Vagina (tissue), 2 donors: ENCODE measurements at regions of chr11 and their contacts with region 1.

Region 1: DNA sequence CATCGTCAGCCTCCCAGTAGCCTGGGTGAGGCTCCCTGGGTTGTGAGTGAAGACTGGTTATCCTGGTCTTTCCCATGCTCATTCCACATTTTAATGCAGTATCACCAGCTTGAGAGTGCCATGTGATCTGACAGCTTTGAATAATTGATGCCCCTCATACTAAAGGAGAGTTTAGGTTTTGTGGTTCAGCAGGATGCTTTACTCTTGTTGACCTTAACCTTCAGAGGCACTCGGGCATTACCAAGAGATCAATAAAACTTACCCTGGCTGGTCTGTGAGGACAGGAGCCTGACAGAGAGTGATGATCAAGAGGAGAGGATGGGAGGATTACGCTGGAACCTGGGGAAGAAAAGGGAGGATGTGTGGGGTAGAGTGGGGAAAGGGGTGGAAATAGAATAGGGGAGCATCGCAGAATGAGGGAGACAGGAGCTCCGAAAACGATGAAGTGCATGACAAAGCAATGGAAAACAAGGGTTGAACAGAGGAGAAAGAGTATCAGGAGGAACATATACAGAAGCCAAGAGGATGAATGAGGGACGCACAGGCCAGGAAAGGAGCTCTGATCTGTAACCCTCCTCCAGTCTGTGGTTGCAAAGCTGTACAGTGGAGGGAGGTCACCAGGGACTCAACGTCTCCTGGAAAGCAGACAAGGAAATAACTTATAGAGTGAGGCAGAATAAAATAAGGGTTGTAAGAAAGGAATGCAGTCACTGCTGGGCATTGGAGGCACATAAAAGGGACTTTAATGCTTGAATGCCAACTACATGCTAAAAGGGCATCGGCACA is 594.5 kb downstream of the NTM start:
- DNase-seq: no peak
- H3K4me3 ChIP-seq: no peak overlapping the region
- H3K27ac ChIP-seq: no peak overlapping the region
- H3K4me1 ChIP-seq: no peaks in the 10 kb centered on the region
- H3K27me3 ChIP-seq: no peaks in the 10 kb centered on the region
- CTCF ChIP-seq: no peak
- POLR2A ChIP-seq: no peak

Region 2: DNA sequence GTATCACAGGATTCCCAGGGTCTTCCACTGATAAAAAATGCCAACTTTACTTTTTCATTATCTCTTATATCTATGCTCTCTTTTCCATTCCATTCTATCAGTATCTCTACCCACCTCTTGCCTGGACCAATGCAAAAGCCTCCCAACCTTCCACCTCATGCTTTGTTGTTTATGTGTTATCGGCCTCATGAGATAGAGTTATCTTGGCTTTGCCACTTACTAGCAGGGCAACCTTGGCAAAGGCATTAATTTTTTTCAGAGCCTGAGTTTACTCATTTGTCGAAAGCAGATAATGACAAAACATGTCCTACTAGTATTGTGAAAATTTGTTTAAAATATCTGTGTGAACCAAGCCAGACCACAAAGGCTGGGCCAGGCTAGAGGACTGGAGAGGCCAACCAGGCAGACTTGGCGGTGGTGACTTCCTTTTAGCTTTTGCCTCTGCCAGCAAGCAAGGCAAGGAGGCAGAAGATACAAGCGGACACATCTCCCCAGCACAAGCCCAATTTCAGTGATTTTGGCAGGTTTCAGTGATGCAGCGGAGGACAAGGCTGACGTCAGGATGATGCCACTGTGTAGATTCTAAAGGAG is 1409.5 kb before region 1 on chr11:
- intact Hi-C with region 1: loop called (anchors 5 kb)
- DNase-seq: no peak
- H3K4me3 ChIP-seq: no peak overlapping the region
- H3K27ac ChIP-seq: peak overlapping the region; percentile 38
- H3K4me1 ChIP-seq: peaks cover 6% of the 10 kb centered on the region
- H3K27me3 ChIP-seq: no peaks in the 10 kb centered on the region
- CTCF ChIP-seq: no peak
- POLR2A ChIP-seq: no peak

Region 3: GRCh38 chr11:131118247-131118646 is 846.6 kb before region 1 on chr11:
- intact Hi-C with region 1: loop called (anchors 5 kb)
- DNase-seq: peak in 1 of 2 donors; percentile 70
- H3K4me3 ChIP-seq: no peak overlapping the region
- H3K27ac ChIP-seq: no peak overlapping the region
- H3K4me1 ChIP-seq: no peaks in the 10 kb centered on the region
- H3K27me3 ChIP-seq: no peaks in the 10 kb centered on the region
- CTCF ChIP-seq: no peak
- POLR2A ChIP-seq: no peak

Region 4: DNA sequence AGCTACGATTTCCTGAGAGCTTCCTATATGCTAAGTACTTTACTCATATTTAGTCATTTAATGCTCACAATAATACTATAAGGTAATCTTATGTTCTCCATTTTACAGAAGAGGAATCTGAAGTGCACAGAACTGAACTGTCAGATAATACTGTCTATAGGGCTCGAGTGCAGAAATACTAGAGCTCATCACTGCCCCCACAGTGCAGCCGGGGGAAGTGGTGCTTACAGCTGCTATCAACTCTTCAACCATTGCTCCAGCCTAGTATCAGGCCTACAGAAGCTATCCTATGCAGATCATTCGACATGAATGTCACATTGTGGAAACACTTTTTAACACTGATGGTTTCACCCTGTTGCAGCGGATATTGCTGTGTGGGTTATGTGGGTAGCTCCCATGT is 335.4 kb after region 1 on chr11:
- intact Hi-C with region 1: no loop called
- DNase-seq: no peak
- H3K4me3 ChIP-seq: no peak overlapping the region
- H3K27ac ChIP-seq: no peak overlapping the region
- H3K4me1 ChIP-seq: no peaks in the 10 kb centered on the region
- H3K27me3 ChIP-seq: no peaks in the 10 kb centered on the region
- CTCF ChIP-seq: no peak
- POLR2A ChIP-seq: no peak